Right cardiac atrium (tissue), 5 donors: ENCODE measurements at regions of chr9 and their contacts with region 1.

Region 1: GRCh38 chr9:130107234-130107861 is 53.6 kb downstream of the GPR107 start:
- DNase-seq: peak; percentile 86 to 95 (median 88)
- ATAC-seq: peak; percentile 58 to 77
- H3K4me3 ChIP-seq: no peak overlapping the region
- H3K27ac ChIP-seq: no peak overlapping the region
- H3K4me1 ChIP-seq: peaks cover 3% of the 10 kb centered on the region
- H3K27me3 ChIP-seq: no peaks in the 10 kb centered on the region

Region 2: GRCh38 chr9:130156672-130157071 is 49.3 kb after region 1 on chr9:
- intact Hi-C with region 1: no loop called
- DNase-seq: peak in 2 of 3 donors; percentile 40 to 59
- ATAC-seq: peak; percentile 65 to 75
- H3K4me3 ChIP-seq: no peak overlapping the region
- H3K27ac ChIP-seq: no peak overlapping the region
- H3K4me1 ChIP-seq: no peaks in the 10 kb centered on the region
- H3K27me3 ChIP-seq: no peaks in the 10 kb centered on the region

Region 3: GRCh38 chr9:130235897-130236668 is 128.7 kb after region 1 on chr9:
- intact Hi-C with region 1: loop called (anchors 1 to 5 kb)
- DNase-seq: peak; percentile 64 to 86 (median 86)
- ATAC-seq: peak; percentile 49 to 50
- H3K4me3 ChIP-seq: no peak overlapping the region
- H3K27ac ChIP-seq: no peak overlapping the region
- H3K4me1 ChIP-seq: no peaks in the 10 kb centered on the region
- H3K27me3 ChIP-seq: no peaks in the 10 kb centered on the region

Region 4: DNA sequence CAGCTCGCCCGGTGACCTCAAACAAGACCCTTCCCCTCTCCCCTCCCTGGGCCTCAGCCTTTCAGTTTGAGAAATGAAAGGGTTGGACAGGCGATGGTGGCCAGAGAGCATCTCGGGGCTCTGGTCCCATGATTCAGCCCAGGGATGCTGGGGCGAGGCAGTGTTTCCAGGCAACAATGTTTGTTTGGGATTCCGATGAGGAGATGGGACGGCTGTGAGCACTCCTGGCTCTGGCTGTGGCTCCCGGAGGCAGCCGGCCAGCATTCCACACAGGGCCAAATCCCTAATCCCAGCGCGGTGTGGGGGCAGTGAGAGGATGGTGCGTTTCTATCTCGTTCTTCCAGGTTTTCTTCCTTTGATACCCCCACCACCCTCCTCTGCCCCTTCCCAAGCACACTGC is 224.2 kb after region 1 on chr9:
- intact Hi-C with region 1: loop called in 1 of 4 experiments (anchors 10 kb)
- DNase-seq: peak; percentile 74 to 89 (median 87)
- ATAC-seq: peak; percentile 76 to 78
- H3K4me3 ChIP-seq: no peak overlapping the region
- H3K27ac ChIP-seq: peak overlapping the region; percentile 31
- H3K4me1 ChIP-seq: peaks cover 2% of the 10 kb centered on the region
- H3K27me3 ChIP-seq: no peaks in the 10 kb centered on the region